Transverse colon (tissue), 4 donors: ENCODE measurements at regions of chr6 and their contacts with region 1.

Region 1: GRCh38 chr6:135890876-135891275 is 39.4 kb downstream of the PDE7B start:
- DNase-seq: no peak
- H3K4me3 ChIP-seq: no peak overlapping the region
- H3K27ac ChIP-seq: no peak overlapping the region
- H3K4me1 ChIP-seq: no peaks in the 10 kb centered on the region
- H3K27me3 ChIP-seq: no peaks in the 10 kb centered on the region
- CTCF ChIP-seq: no peak
- EP300 ChIP-seq: no peak
- POLR2A ChIP-seq: no peak

Region 2: DNA sequence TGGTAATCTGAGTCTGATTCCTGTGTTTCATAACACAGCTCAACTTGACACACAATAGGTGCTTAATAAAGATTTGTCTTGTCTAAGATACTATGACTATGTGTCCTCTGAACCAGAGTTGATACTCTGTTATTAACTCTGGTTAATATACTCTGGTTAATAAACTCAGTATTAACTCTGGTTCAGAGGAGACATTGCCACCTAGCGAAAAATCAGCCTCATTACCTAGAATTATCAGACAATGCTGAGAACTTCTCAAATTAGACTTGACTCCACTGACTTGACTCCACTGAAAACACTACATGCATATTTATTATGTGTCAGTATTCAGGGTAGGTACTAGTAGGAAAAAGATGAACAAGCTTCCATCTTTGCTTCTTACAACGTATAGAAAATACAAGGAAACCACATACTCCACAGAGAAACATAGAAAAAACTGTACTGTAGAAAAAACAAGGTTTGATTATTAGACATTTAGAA is 467.2 kb before region 1 on chr6:
- in situ Hi-C with region 1: no loop called
- intact Hi-C with region 1: loop called (anchors 5 kb)
- DNase-seq: no peak
- H3K4me3 ChIP-seq: no peak overlapping the region
- H3K27ac ChIP-seq: no peak overlapping the region
- H3K4me1 ChIP-seq: peaks cover 0 to 10% (median 0%) of the 10 kb centered on the region in 4 donors
- H3K27me3 ChIP-seq: no peaks in the 10 kb centered on the region
- CTCF ChIP-seq: peak; percentile 46 to 81 (median 62)
- EP300 ChIP-seq: no peak
- POLR2A ChIP-seq: no peak

Region 3: GRCh38 chr6:136086686-136087085 is 195.8 kb after region 1 on chr6:
- in situ Hi-C with region 1: no loop called
- intact Hi-C with region 1: no loop called
- DNase-seq: no peak
- H3K4me3 ChIP-seq: no peak overlapping the region
- H3K27ac ChIP-seq: peak overlapping the region in 3 of 4 donors; percentile 21 to 40 (median 25)
- H3K4me1 ChIP-seq: no peaks in the 10 kb centered on the region
- H3K27me3 ChIP-seq: no peaks in the 10 kb centered on the region
- CTCF ChIP-seq: no peak
- EP300 ChIP-seq: no peak
- POLR2A ChIP-seq: no peak

Region 4: GRCh38 chr6:136103763-136104311 is 213.0 kb after region 1 on chr6:
- in situ Hi-C with region 1: no loop called
- intact Hi-C with region 1: no loop called
- DNase-seq: peak; percentile 10
- H3K4me3 ChIP-seq: no peak overlapping the region
- H3K27ac ChIP-seq: peak overlapping the region; percentile 65 to 85 (median 73)
- H3K4me1 ChIP-seq: peaks cover 0 to 19% (median 9%) of the 10 kb centered on the region in 4 donors
- H3K27me3 ChIP-seq: no peaks in the 10 kb centered on the region
- CTCF ChIP-seq: no peak
- EP300 ChIP-seq: no peak
- POLR2A ChIP-seq: no peak

Region 5: GRCh38 chr6:136446579-136447182 is 555.8 kb after region 1 on chr6:
- in situ Hi-C with region 1: no loop called
- intact Hi-C with region 1: no loop called
- DNase-seq: no peak
- H3K4me3 ChIP-seq: no peak overlapping the region
- H3K27ac ChIP-seq: no peak overlapping the region
- H3K4me1 ChIP-seq: peaks cover 0 to 33% (median 6%) of the 10 kb centered on the region in 4 donors
- H3K27me3 ChIP-seq: no peaks in the 10 kb centered on the region
- CTCF ChIP-seq: no peak
- EP300 ChIP-seq: no peak
- POLR2A ChIP-seq: no peak